Psoas muscle (tissue), 8 donors: ENCODE measurements at regions of chr9 and their contacts with region 1.

Region 1: DNA sequence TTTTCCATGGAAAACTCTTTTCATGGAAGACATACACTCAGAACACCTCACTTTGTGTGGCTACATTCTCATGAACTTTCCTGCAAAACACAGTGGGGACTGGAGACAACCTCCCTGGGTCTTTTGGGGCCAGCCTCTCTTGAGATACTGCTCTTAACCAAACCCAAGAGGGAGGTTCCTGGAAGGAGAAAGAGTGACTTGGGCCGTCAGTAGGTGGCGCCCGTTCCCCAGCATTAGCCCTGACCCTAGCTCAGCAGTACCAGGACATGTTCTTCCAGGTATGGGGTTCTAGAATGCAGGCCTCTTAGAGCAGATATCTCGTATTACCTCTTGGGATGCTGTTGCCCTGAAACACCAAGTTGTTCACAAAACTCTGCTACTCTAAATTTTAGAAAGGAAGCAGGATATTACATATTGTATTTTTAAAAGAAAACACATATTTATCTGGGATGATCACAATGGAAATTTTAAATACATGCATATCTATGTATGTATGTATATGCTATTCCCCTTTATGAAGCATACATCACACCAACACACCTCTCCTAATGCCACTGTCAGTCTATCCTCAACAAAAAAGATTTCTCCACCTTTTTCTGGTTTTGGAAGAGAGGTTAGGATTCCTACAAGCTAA is 15.8 kb upstream of the GLIS3 start:
- DNase-seq: peak; percentile 67 to 85
- ATAC-seq: peak; percentile 56 to 93 (median 86)
- H3K4me3 ChIP-seq: no peak overlapping the region
- H3K27ac ChIP-seq: no peak overlapping the region
- H3K4me1 ChIP-seq: no peaks in the 10 kb centered on the region
- H3K27me3 ChIP-seq: peaks cover 0 to 3% (median 0%) of the 10 kb centered on the region in 3 donors
- CTCF ChIP-seq: peak; percentile 79

Region 2: GRCh38 chr9:4301971-4302427 is 13.7 kb before region 1 on chr9:
- intact Hi-C with region 1: no loop called
- DNase-seq: peak; percentile 68 to 78
- ATAC-seq: peak; percentile 25 to 62 (median 52)
- H3K4me3 ChIP-seq: no peak overlapping the region
- H3K27ac ChIP-seq: no peak overlapping the region
- H3K4me1 ChIP-seq: no peaks in the 10 kb centered on the region
- H3K27me3 ChIP-seq: peaks cover 0 to 15% (median 0%) of the 10 kb centered on the region in 3 donors
- CTCF ChIP-seq: no peak

Region 3: DNA sequence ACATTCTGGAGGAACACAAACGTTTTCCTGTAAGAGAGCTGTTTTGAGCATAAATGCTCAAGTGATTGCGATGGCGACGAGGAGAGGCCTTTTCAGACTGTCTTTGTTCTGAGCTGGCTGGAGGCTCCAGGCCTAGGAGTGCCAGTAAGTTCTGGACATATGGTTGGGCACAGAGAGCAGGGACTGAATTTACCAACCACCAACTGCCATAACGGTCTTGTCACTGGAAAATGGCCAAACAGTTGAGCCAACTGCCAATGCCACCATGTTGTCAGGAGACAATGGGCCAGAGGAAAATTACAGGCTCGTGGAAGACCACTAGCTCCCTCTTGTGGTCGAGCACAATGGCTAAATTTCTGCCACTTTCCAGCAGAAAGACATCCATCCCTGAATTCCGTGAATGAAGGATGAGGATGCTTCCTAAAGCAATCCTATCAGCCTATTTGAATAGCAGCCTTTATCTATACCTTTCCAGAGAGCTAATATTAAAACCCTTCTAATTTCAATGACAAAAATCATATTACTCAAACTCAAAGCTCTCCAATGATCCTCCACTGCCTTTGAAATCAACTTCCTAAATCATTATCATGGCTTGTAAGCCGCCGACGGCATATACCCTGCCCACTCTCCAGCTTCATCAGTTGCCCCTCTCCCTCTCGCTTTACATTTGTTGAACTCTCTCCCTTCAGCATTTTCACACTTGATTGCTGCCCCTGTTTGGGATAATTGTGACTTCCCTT is 51.1 kb after region 1 on chr9:
- intact Hi-C with region 1: loop called in 1 of 2 experiments (anchors 2 kb)
- DNase-seq: no peak
- ATAC-seq: peak; percentile 34 to 53 (median 44)
- H3K4me3 ChIP-seq: no peak overlapping the region
- H3K27ac ChIP-seq: no peak overlapping the region
- H3K4me1 ChIP-seq: no peaks in the 10 kb centered on the region
- H3K27me3 ChIP-seq: no peaks in the 10 kb centered on the region
- CTCF ChIP-seq: peak; percentile 60